Tibial artery (tissue), 4 donors: ENCODE measurements at regions of chr19 and their contacts with region 1.

Region 1: DNA sequence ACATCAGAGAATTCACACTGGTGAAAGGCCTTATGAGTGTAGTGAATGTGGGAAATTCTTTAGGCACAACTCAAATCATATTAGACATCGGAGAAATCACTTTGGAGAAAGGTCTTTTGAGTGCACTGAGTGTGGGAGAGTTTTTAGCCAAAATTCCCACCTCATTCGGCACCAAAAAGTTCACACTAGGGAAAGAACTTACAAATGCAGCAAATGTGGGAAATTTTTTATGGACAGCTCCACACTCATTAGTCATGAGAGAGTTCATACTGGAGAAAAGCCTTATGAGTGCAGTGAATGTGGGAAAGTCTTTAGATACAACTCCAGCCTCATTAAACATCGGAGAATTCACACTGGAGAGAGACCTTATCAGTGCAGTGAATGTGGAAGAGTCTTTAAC is 10.1 kb downstream of the ZNF17 start:
- DNase-seq: no peak
- H3K4me3 ChIP-seq: no peak overlapping the region
- H3K27ac ChIP-seq: no peak overlapping the region
- H3K4me1 ChIP-seq: no peaks in the 10 kb centered on the region
- H3K27me3 ChIP-seq: no peaks in the 10 kb centered on the region
- CTCF ChIP-seq: no peak

Region 2: DNA sequence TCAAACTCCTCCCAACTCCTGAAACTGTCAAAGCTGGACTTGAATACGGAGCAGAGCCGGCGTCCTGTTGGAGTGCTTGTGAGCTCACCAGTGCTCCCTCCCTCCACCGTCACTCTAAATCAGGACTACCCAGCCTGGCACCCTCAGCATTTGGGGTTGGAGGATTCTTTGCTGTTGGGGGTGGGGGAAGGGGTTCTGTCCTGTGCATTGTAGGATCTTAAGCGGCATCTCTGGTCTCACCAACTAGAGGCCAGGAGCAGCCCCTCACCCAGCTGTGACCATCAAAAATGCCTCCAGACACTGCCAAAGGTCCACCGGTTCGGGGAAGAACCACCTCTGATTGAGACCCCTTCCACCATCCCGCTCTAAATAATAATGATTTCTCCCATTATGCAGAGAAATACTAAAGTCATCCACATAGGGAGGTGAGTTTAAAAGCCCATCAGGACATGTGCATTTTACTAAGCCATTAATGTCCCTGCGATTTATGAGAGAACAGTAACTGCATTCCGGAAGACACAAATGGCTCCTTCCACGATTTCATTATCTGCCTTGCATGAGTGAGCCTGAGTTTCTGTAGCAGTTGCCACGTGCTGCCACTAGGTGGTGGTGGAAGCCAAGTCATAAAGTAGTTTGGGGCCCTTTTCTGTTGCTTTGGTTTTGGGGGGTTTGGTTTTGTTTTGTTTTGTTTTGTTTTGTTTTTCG is 317.3 kb before region 1 on chr19:
- intact Hi-C with region 1: loop called (anchors 10 kb)
- DNase-seq: peak; percentile 53 to 67
- H3K4me3 ChIP-seq: peak overlapping the region in 1 of 2 donors; percentile 13
- H3K27ac ChIP-seq: no peak overlapping the region
- H3K4me1 ChIP-seq: peaks cover 0 to 10% (median 0%) of the 10 kb centered on the region in 4 donors
- H3K27me3 ChIP-seq: peaks cover 0 to 25% of the 10 kb centered on the region in 2 donors
- CTCF ChIP-seq: peak; percentile 82